Endothelial cell of umbilical vein (primary cell): ENCODE measurements at regions of chr1 and their contacts with region 1.

Region 1: DNA sequence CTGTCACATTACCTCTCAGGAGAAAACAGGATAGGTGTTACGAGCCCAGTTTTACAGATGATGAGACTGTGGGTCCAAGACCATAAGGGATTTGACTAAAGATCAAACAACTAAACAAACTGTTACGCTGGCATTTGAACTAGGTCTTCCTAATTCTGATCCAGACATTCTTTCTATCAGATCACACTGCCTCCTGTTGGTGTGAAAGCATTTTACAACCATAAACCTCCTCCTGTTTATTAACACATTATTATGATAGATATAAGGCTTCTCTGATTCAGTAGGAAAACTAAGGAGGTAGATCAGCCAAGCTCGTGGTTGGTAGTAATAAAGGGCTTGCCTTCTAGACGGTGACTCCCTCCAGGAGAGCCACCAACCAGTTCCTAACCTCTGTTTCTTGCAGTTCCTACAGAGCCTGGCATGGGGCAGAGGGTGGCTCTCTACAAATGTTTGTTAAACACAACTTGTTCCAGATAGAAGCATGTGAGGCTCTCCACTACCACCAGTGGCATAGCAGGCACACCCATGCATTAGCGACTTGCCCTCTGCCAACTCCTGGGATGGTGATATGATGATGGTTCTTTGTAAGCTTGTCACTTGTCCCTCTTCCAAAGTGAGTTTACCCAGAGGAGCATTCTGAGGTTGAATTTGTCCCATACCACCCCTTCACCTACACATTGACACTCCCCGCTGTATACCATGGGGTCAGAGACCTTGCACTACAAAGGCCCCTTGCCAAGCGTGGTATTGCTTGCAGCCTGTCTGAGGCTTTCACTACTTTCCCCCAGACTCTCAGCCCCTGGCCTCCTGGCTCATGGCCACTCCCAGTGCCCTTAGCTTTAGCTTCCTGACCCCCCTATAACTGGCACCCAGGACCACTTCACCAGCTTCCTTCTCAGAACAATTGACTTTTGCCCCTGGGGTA is 96.4 kb upstream of the HOOK1 start:
- DNase-seq: no peak
- H3K4me3 ChIP-seq: no peak overlapping the region
- H3K27ac ChIP-seq: no peak overlapping the region
- H3K4me1 ChIP-seq: peaks cover 4% of the 10 kb centered on the region
- H3K27me3 ChIP-seq: no peaks in the 10 kb centered on the region
- CTCF ChIP-seq: peak in 1 of 2 donors; percentile 13
- POLR2A ChIP-seq: no peak

Region 2: GRCh38 chr1:59707178-59707791 is 11.0 kb before region 1 on chr1:
- CTCF ChIA-PET with region 1: interaction called, 10 read pairs
- POLR2A ChIA-PET with region 1: no interaction called
- dilution Hi-C with region 1: no loop called
- intact Hi-C with region 1: no loop called
- DNase-seq: peak; percentile 86
- H3K4me3 ChIP-seq: no peak overlapping the region
- H3K27ac ChIP-seq: no peak overlapping the region
- H3K4me1 ChIP-seq: peaks cover 12% of the 10 kb centered on the region
- H3K27me3 ChIP-seq: no peaks in the 10 kb centered on the region
- CTCF ChIP-seq: no peak
- POLR2A ChIP-seq: no peak

Region 3: DNA sequence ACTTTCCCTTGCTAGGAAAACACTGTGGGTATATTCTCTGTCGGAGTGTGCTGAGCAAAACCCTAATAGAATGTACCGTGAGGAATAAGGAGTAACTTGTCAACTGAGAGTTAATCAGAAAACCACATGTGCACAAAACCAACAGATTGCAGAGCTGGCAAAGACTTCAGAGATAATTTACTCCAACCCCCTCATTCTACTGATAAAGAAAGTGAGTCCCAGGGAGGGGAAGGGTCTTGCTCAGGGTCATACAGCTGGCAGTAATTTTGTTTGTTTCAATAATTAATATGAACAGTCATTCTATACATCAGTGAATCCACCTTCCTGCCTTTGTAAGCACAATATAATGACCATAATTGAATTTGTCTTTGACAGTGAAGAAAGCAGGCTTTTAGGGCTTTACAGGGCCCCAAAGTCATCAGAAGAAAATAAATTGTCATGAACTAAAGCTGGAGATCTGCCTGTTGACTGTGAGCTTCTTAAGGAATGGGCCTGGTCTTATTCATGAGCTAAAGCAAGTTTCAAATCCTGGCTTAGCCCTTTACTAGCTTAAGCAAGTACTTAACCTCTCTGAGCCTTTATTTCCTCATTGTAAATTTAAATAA is 29.2 kb after region 1 on chr1:
- CTCF ChIA-PET with region 1: no interaction called
- POLR2A ChIA-PET with region 1: no interaction called
- dilution Hi-C with region 1: no loop called
- intact Hi-C with region 1: no loop called
- DNase-seq: peak; percentile 21
- H3K4me3 ChIP-seq: no peak overlapping the region
- H3K27ac ChIP-seq: no peak overlapping the region
- H3K4me1 ChIP-seq: peaks cover 51% of the 10 kb centered on the region
- H3K27me3 ChIP-seq: no peaks in the 10 kb centered on the region
- CTCF ChIP-seq: no peak
- POLR2A ChIP-seq: no peak